ENCODE measurements at regions of chr14 and their contacts with region 1.

Region 1: DNA sequence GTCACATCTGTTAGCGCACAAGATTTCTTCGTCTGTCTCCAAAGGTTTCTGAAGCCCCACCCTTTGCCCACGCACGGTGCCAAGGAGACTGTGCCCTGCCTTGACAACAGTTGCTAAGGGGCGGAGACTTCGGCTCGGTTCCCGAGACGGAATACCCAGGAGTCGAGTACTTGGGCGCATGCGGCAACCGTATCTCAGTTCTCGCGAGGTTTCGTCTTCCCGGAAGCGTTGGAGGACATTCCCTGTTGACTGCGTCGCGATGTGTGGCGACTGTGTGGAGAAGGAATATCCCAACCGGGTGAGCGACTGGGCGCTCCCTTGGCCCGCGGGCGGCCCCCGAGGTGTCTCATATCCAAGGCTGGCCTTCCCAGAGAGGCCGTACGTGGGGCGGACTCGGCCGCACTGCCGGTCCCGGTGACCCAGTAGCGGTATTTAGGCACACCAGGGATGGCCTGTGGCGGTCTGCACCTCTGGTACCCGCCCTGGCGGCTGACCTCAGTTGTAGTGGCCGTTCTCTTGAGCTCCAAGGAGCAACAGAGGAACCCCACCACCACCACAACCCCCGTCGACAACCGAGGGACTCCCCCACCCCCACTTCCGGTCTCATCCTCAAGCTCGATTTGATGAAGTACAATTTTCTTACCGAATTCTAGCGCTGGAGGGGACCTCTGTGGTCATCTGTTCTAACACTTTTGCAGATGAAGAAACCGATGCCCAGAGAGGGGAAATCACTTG is at the start of gene CHURC1:
- DNase-seq: peak; percentile 91 to 99 (median 97)
- ATAC-seq: peak; percentile 92
- H3K4me3 ChIP-seq: peak within 1 kb of the TSS; percentile 86 to 98
- H3K4me3 Mint-ChIP-seq: peak within 1 kb of the TSS; percentile 85
- H3K27ac ChIP-seq: peak within 1 kb of the TSS; percentile 98 to 99
- H3K27ac Mint-ChIP-seq: peak within 1 kb of the TSS; percentile 91
- H3K4me1 ChIP-seq: peaks cover 42% of the 10 kb centered on the region
- H3K4me1 Mint-ChIP-seq: peaks cover 47% of the 10 kb centered on the region
- H3K27me3 ChIP-seq: no peaks in the 10 kb centered on the region
- H3K27me3 Mint-ChIP-seq: no peaks in the 10 kb centered on the region
- CTCF ChIP-seq: no peak
- total RNA-seq, gene CHURC1: 43.9 to 46.7 TPM

Region 2: DNA sequence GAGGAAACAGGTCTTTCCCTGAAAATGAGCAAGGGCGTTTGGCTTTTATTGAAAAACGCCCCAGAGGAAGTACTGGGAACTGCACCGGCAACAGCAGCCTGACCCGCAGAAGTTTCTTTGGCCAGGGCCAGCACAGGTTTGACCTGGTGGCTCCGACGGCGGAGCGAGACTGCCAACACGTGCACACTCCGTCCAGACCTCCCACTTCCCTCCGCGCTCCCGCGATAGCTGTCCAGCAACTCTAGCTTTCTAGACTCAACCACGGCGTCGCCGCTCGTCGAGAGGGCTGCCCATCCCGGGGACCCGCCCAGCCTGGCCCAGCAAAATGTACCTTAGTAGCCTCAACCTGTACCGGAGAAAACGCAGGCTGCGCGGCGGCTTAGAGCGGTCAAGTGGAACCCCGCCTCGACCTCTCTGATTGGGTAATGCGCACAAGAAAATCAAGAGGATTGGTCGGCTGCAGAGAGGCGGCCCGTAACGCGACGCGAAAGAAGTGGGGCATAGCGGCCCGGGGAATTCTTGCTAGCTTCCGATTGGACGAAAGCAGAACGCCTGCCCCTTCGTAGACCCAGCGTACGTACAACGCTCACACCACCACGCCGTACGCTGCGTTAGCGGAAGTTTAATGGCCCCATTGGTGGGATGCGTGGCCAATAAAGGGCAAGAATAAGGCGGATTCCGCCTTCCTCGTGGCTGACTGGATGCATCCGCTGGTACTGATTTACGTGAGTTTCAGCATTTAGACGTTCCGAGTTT is 1272.8 kb before region 1 on chr14 and contains the start of gene WDR89:
- CTCF ChIA-PET with region 1: no interaction called
- POLR2A ChIA-PET with region 1: no interaction called
- intact Hi-C with region 1: loop called in 1 of 2 experiments (anchors 5 kb)
- DNase-seq: peak; percentile 91 to 100 (median 94)
- ATAC-seq: peak; percentile 85
- H3K4me3 ChIP-seq: peak within 1 kb of the TSS; percentile 85 to 89
- H3K4me3 Mint-ChIP-seq: peak within 1 kb of the TSS; percentile 87
- H3K27ac ChIP-seq: peak within 1 kb of the TSS; percentile 94 to 99
- H3K27ac Mint-ChIP-seq: peak within 1 kb of the TSS; percentile 96
- H3K4me1 ChIP-seq: peaks cover 30% of the 10 kb centered on the region
- H3K4me1 Mint-ChIP-seq: peaks cover 57% of the 10 kb centered on the region
- H3K27me3 ChIP-seq: no peaks in the 10 kb centered on the region
- H3K27me3 Mint-ChIP-seq: no peaks in the 10 kb centered on the region
- CTCF ChIP-seq: peak; percentile 72
- total RNA-seq, gene WDR89: 13.6 to 13.7 TPM

Region 3: DNA sequence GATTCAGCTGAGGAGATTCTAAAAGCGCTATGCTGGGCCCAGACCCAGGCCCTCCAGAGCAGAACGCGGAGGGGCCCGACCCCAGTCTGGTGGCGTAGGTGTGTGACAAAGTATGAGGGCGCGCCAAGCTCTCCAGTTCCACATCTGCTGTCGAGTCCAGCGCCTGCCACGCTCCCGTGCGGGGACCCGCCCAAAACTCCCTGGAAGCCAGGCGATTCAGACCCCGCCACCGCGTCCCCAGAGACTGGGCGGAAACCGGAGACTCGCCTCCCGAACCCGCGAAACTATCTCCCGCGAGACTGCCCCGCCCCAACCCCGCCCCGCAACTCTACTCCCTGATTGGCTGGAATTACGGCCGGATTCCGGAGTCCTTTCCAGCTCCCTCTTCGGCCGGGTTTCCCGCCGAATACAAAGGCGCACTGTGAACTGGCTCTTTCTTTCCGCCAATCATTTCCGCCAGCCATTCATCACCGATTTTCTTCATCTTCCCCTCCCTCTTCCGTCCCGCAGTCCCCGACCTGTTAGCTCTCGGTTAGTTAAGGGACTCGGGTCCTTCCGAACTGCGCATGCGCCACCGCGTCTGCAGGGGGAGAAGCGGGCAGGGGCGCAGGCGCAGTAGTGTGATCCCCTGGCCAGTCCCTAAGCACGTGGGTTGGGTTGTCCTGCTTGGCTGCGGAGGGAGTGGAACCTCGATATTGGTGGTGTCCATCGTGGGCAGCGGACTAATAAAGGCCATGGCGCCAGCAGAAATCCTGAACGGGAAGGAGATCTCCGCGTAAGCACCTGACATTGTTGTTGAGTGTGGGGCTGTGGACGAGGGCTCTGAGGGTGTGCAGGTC is 526.5 kb before region 1 on chr14 and contains the start of gene MTHFD1:
- CTCF ChIA-PET with region 1: no interaction called
- POLR2A ChIA-PET with region 1: no interaction called
- intact Hi-C with region 1: loop called in 1 of 2 experiments (anchors 5 kb)
- DNase-seq: peak; percentile 88 to 98 (median 97)
- ATAC-seq: peak; percentile 84
- H3K4me3 ChIP-seq: peak within 1 kb of the TSS; percentile 79 to 80
- H3K4me3 Mint-ChIP-seq: peak within 1 kb of the TSS; percentile 99
- H3K27ac ChIP-seq: peak within 1 kb of the TSS; percentile 33 to 50
- H3K27ac Mint-ChIP-seq: peak within 1 kb of the TSS; percentile 95
- H3K4me1 ChIP-seq: peaks cover 20% of the 10 kb centered on the region
- H3K4me1 Mint-ChIP-seq: peaks cover 37% of the 10 kb centered on the region
- H3K27me3 ChIP-seq: no peaks in the 10 kb centered on the region
- H3K27me3 Mint-ChIP-seq: no peaks in the 10 kb centered on the region
- CTCF ChIP-seq: no peak
- total RNA-seq, gene MTHFD1: 14.4 to 15.6 TPM

Region 4: GRCh38 chr14:64496764-64497163 is 417.6 kb before region 1 on chr14:
- CTCF ChIA-PET with region 1: no interaction called
- POLR2A ChIA-PET with region 1: no interaction called
- intact Hi-C with region 1: no loop called
- DNase-seq: no peak
- ATAC-seq: no peak
- H3K4me3 ChIP-seq: no peak overlapping the region
- H3K4me3 Mint-ChIP-seq: peak overlapping the region; percentile 52
- H3K27ac ChIP-seq: peak overlapping the region in 1 of 2 experiments; percentile 7
- H3K27ac Mint-ChIP-seq: peak overlapping the region; percentile 88
- H3K4me1 ChIP-seq: peaks cover 71% of the 10 kb centered on the region
- H3K4me1 Mint-ChIP-seq: peaks cover 76% of the 10 kb centered on the region
- H3K27me3 ChIP-seq: no peaks in the 10 kb centered on the region
- H3K27me3 Mint-ChIP-seq: no peaks in the 10 kb centered on the region
- CTCF ChIP-seq: no peak

Region 5: GRCh38 chr14:64928239-64929013 is 14.0 kb after region 1 on chr14:
- CTCF ChIA-PET with region 1: interaction called, 4 read pairs
- POLR2A ChIA-PET with region 1: interaction called, 55 read pairs
- intact Hi-C with region 1: loop called (anchors 1 kb)
- DNase-seq: peak in 2 of 9 experiments; percentile 34 to 65
- ATAC-seq: peak; percentile 81
- H3K4me3 ChIP-seq: peak overlapping the region; percentile 0 to 26
- H3K4me3 Mint-ChIP-seq: no peak overlapping the region
- H3K27ac ChIP-seq: peak overlapping the region; percentile 49 to 79
- H3K27ac Mint-ChIP-seq: no peak overlapping the region
- H3K4me1 ChIP-seq: peaks cover 66% of the 10 kb centered on the region
- H3K4me1 Mint-ChIP-seq: peaks cover 28% of the 10 kb centered on the region
- H3K27me3 ChIP-seq: no peaks in the 10 kb centered on the region
- H3K27me3 Mint-ChIP-seq: no peaks in the 10 kb centered on the region
- CTCF ChIP-seq: no peak

Region 6: GRCh38 chr14:65281991-65282895 is 367.8 kb after region 1 on chr14:
- CTCF ChIA-PET with region 1: no interaction called
- POLR2A ChIA-PET with region 1: no interaction called
- intact Hi-C with region 1: loop called in 1 of 2 experiments (anchors 10 kb)
- DNase-seq: peak in 3 of 9 experiments; percentile 32 to 58 (median 42)
- ATAC-seq: peak; percentile 51
- H3K4me3 ChIP-seq: peak overlapping the region; percentile 25 to 32
- H3K4me3 Mint-ChIP-seq: peak overlapping the region; percentile 83
- H3K27ac ChIP-seq: peak overlapping the region; percentile 19 to 55
- H3K27ac Mint-ChIP-seq: peak overlapping the region; percentile 95
- H3K4me1 ChIP-seq: peaks cover 32% of the 10 kb centered on the region
- H3K4me1 Mint-ChIP-seq: peaks cover 42% of the 10 kb centered on the region
- H3K27me3 ChIP-seq: no peaks in the 10 kb centered on the region
- H3K27me3 Mint-ChIP-seq: no peaks in the 10 kb centered on the region
- CTCF ChIP-seq: no peak